Gastrocnemius medialis (tissue), 4 donors: ENCODE measurements at regions of chr5 and their contacts with region 1.

Region 1: DNA sequence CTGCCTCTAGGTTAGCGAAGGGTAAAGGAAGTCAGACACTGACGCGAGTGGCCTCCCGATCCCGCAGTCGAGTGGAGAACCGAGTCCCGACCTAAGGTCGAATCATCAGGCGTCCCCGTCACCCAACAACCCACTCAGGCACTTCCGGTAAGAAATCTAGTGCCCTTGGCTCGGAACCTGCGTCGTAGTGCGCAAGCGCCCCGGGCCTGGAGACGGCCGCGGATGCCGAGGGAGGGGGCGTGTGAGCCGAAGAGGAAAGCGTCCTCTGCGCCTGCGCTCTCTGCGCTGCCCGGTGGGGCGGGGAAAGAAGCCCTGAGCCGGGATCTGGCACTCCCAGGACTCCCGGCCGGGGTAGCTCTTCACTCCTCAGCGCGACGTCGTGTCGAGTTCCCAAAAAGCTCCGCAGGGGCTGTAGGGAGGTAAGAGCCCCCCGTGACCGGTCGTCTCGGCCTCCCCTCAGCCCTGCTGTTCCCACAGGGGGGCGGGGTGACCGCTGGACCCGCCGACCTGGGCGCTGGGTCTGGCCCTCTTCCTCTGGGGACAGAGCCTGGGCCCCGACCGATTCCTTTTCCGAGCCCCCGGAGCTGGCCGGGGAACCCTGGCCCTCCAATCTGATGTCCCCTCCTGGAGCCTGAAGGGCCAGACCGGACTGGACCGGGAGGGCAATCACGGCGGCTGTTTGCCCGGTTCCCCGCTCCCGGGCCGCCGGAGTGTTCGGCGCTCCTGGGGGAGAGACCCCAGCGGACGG is at the start of gene ZFYVE16:
- DNase-seq: peak; percentile 95 to 97
- ATAC-seq: peak; percentile 94 to 95
- H3K4me3 ChIP-seq: peak within 1 kb of the TSS; percentile 88 to 98 (median 93)
- H3K27ac ChIP-seq: peak within 1 kb of the TSS; percentile 94 to 99 (median 96)
- H3K4me1 ChIP-seq: peaks cover 18 to 22% of the 10 kb centered on the region in 2 donors
- H3K27me3 ChIP-seq: no peaks in the 10 kb centered on the region
- CTCF ChIP-seq: peak; percentile 48 to 74 (median 60)
- POLR2A ChIP-seq: peak; percentile 87 to 93
- total RNA-seq, gene ZFYVE16: 9.7 to 19.1 (median 12.4) TPM

Region 2: DNA sequence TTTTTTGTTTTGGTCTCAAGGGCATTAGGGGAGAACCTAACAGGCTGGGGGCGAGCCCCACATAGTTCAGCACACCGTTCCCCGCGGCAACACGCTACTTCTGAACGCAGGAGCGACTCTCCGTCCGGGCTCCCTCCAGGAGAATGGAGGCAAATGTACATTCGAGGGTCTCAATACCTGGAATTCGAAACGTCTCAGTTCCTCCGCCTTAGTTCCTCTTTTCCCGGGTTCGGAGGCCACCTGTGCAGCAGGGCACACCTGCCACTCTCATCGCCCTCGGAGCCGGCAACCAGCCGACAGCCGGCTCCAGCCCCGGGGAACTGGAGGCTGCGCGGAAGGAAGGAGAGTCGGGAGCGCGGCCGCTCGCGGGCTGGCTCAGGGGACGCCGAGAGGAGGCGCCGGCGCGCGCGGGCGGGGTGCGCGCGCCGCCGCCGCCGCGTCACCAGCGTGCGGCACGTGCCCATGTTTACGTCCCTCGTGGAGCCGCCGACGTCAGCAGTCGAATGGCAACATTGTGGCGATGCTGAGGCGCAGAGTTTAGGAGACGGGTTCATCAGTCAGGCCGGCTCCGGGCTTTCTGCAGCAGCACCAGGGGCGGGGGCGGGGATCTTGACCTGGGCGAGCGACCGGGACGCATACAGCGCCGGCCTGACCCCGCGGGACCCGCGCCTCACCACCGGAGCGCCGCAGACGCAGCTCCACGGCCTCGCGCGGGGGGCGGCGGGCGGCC is 1172.1 kb before region 1 on chr5 and contains the start of gene JMY:
- in situ Hi-C with region 1: no loop called
- intact Hi-C with region 1: loop called (anchors 5 kb)
- DNase-seq: peak; percentile 78 to 81
- ATAC-seq: peak; percentile 83 to 86
- H3K4me3 ChIP-seq: peak within 1 kb of the TSS; percentile 70 to 96 (median 86)
- H3K27ac ChIP-seq: peak within 1 kb of the TSS; percentile 85 to 96 (median 95)
- H3K4me1 ChIP-seq: peaks cover 31 to 33% of the 10 kb centered on the region in 2 donors
- H3K27me3 ChIP-seq: no peaks in the 10 kb centered on the region
- CTCF ChIP-seq: peak in 1 of 5 experiments; percentile 37
- POLR2A ChIP-seq: peak; percentile 92 to 98
- total RNA-seq, gene JMY: 11.4 to 26.7 (median 16.8) TPM

Region 3: GRCh38 chr5:79612667-79613198 is 795.2 kb before region 1 on chr5:
- in situ Hi-C with region 1: no loop called
- intact Hi-C with region 1: loop called (anchors 10 kb)
- DNase-seq: no peak
- ATAC-seq: peak; percentile 7 to 56
- H3K4me3 ChIP-seq: peak overlapping the region; percentile 74 to 99 (median 94)
- H3K27ac ChIP-seq: peak overlapping the region; percentile 88 to 98 (median 97)
- H3K4me1 ChIP-seq: peaks cover 9 to 16% of the 10 kb centered on the region in 2 donors
- H3K27me3 ChIP-seq: no peaks in the 10 kb centered on the region
- CTCF ChIP-seq: no peak
- POLR2A ChIP-seq: no peak

Region 4: DNA sequence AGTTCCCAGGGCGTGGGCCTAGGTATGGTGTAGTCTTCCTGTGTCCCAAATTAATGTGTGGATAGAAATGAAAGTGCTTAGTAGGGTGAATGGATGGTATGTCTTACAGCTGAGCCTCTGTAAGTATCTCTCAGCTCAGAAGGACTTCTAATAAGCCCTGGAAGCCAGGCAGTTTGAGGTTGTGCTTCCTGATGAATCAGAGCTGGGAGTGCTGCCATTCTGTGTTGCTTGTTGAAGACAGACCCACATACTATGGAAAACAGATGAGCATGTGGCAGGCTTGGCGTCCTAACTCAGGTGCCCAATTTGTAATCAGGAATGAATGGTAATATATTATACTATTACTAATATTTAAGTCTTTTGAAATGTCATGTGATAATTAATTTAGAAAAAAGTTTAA is 648.5 kb before region 1 on chr5:
- in situ Hi-C with region 1: no loop called
- intact Hi-C with region 1: no loop called
- DNase-seq: peak; percentile 42 to 66
- ATAC-seq: peak; percentile 76 to 96
- H3K4me3 ChIP-seq: no peak overlapping the region
- H3K27ac ChIP-seq: peak overlapping the region; percentile 27 to 82 (median 64)
- H3K4me1 ChIP-seq: no peaks in the 10 kb centered on the region
- H3K27me3 ChIP-seq: no peaks in the 10 kb centered on the region
- CTCF ChIP-seq: no peak
- POLR2A ChIP-seq: no peak

Region 5: DNA sequence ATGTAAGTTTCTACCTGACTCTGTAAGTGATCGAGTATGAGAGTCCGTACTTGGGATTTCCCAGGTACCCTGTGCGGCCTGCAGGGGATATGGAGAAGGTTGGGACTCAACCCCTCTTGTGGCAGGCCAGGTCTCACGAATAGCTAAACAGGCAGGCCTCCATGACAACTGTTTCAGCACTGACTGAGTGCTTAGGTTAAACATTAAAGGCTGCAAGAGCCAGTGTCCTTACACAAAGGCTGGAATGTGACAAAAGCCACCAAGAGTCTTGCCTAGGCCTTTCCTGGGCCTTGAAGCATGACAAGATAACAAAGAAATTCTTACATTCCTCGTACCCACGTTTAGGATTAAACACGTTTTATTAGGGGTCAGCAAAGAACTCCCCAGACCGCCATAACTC is 314.1 kb before region 1 on chr5:
- in situ Hi-C with region 1: no loop called
- intact Hi-C with region 1: loop called (anchors 5 kb)
- DNase-seq: no peak
- ATAC-seq: no peak
- H3K4me3 ChIP-seq: no peak overlapping the region
- H3K27ac ChIP-seq: no peak overlapping the region
- H3K4me1 ChIP-seq: no peaks in the 10 kb centered on the region
- H3K27me3 ChIP-seq: no peaks in the 10 kb centered on the region
- CTCF ChIP-seq: no peak
- POLR2A ChIP-seq: no peak

Region 6: GRCh38 chr5:80487829-80488721 is 80.2 kb after region 1 on chr5 and contains the start of gene FAM151B:
- in situ Hi-C with region 1: no loop called
- intact Hi-C with region 1: loop called (anchors 5 kb)
- DNase-seq: peak; percentile 74 to 84
- ATAC-seq: peak; percentile 92 to 95
- H3K4me3 ChIP-seq: peak within 1 kb of the TSS; percentile 66 to 98 (median 78)
- H3K27ac ChIP-seq: peak within 1 kb of the TSS; percentile 46 to 76 (median 70)
- H3K4me1 ChIP-seq: no peaks in the 10 kb centered on the region
- H3K27me3 ChIP-seq: no peaks in the 10 kb centered on the region
- CTCF ChIP-seq: peak in 1 of 5 experiments; percentile 7
- POLR2A ChIP-seq: peak in 1 of 2 donors; percentile 25
- total RNA-seq, gene FAM151B: 0.18 to 1.6 (median 1.1) TPM

Region 7: GRCh38 chr5:80654391-80655230 is 246.7 kb after region 1 on chr5 and contains the starts of genes DHFR and MSH3:
- in situ Hi-C with region 1: no loop called
- intact Hi-C with region 1: loop called (anchors 2 kb)
- DNase-seq: peak; percentile 63 to 73
- ATAC-seq: peak; percentile 55 to 66
- H3K4me3 ChIP-seq: peak within 1 kb of the TSS; percentile 62 to 95 (median 84)
- H3K27ac ChIP-seq: peak within 1 kb of the TSS; percentile 79 to 97 (median 92)
- H3K4me1 ChIP-seq: peaks cover 16 to 19% of the 10 kb centered on the region in 2 donors
- H3K27me3 ChIP-seq: no peaks in the 10 kb centered on the region
- CTCF ChIP-seq: peak in 3 of 5 experiments; percentile 23 to 42 (median 35)
- POLR2A ChIP-seq: peak; percentile 35 to 67
- total RNA-seq, gene DHFR: 2.2 to 5.3 (median 3.7) TPM
- total RNA-seq, gene MSH3: 5.8 to 10.4 (median 7.2) TPM

Region 8: DNA sequence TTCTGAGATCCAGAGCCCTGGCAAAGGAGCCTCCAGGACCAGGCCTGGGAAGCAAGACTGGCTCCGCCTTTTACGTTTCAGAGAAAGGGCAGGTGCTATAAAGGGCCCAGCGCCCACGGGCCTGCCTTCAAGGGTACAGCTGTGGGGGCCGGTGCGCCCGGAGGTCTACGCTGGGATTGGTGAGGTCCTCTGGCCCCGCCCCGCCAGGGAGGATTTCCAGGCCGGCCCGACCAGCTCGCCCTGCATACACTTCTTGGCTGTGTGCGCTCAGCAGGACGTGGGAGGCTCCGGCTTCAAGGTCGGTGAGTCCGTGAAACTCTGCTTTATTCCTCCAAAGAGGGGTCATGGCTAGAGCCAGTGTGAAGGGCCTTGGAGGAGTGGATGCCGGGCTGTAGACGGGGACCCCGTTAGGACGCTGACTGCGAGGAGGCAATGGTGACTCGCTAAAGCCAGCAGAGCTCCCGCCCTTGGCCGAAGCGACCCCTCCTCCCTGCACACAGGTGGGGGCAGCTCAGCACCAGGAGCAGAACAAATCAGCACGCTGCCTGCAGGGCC is 825.2 kb after region 1 on chr5 and contains the start of gene CKMT2:
- in situ Hi-C with region 1: no loop called
- intact Hi-C with region 1: loop called (anchors 10 kb)
- DNase-seq: peak; percentile 90 to 97
- ATAC-seq: peak; percentile 47 to 59
- H3K4me3 ChIP-seq: peak within 1 kb of the TSS; percentile 61 to 75 (median 68)
- H3K27ac ChIP-seq: peak within 1 kb of the TSS; percentile 98 to 100 (median 98)
- H3K4me1 ChIP-seq: peaks cover 47 to 49% of the 10 kb centered on the region in 2 donors
- H3K27me3 ChIP-seq: no peaks in the 10 kb centered on the region
- CTCF ChIP-seq: no peak
- POLR2A ChIP-seq: peak; percentile 88 to 91
- total RNA-seq, gene CKMT2: 550 to 1,114 (median 879) TPM